ENCODE measurements at regions of chr21 and their contacts with region 1.

Region 1: DNA sequence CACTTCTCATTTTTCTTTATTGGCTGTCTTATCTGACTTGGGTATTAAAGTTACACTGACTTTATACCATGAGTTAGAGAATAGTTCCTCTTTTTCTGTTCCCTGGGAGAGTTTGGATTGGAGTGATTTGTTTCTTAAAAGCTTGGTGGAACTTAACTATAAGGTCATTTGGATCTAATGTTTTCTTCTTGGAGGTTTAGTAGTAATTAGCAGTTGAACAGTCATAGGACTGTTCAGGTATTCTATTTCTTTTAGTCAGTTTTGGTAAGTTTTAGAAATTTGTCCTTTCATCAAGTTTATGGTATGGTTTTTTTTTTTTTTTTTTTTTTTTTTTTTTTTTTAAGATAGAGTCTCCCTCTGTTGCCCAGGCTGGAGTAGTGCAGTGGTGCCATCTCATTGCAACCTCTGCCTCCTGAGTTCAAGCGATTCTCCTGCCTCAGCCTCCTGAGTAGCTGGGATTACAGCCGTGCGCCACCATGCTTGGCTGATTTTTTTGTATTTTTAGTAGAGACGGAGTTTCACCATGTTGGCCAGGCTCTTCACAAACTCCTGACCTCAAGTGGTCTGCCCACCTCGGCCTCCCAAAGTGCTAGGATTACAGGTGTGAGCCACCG is 6.3 kb downstream of the TTC3 start:
- DNase-seq: peak in 1 of 4 experiments; percentile 55
- ATAC-seq: peak; percentile 82
- H3K4me3 ChIP-seq: no peak overlapping the region
- H3K27ac ChIP-seq: peak overlapping the region; percentile 33; the same call in 1 of the 3 replicates
- H3K4me1 ChIP-seq: peaks cover 0 to 13% of the 10 kb centered on the region in 2 experiments; a peak in 3 of 5 replicates
- H3K27me3 ChIP-seq: no peaks in the 10 kb centered on the region
- CTCF ChIP-seq: peak; percentile 53 to 65 (median 56)
- EP300 ChIP-seq: no peak
- POLR2A ChIP-seq: no peak
- RAD21 ChIP-seq: peak in 1 of 2 experiments; percentile 19; a peak in 2 of 4 replicates

Region 2: GRCh38 chr21:37017951-37018679 is 61.2 kb before region 1 on chr21:
- CTCF ChIA-PET with region 1: no interaction called
- POLR2A ChIA-PET with region 1: no interaction called
- in situ Hi-C with region 1: no loop called
- intact Hi-C with region 1: loop called (anchors 5 kb)
- DNase-seq: peak in 3 of 4 experiments; percentile 29 to 68 (median 52)
- ATAC-seq: peak; percentile 82
- H3K4me3 ChIP-seq: no peak overlapping the region
- H3K27ac ChIP-seq: no peak overlapping the region; the same call in 2 of the 3 replicates
- H3K4me1 ChIP-seq: peaks cover 10 to 11% of the 10 kb centered on the region in 2 experiments; a peak in 4 of 5 replicates
- H3K27me3 ChIP-seq: peaks cover 0 to 2% of the 10 kb centered on the region in 2 experiments; a peak in 1 of 5 replicates
- CTCF ChIP-seq: no peak
- EP300 ChIP-seq: peak; percentile 71
- POLR2A ChIP-seq: no peak
- RAD21 ChIP-seq: no peak

Region 3: DNA sequence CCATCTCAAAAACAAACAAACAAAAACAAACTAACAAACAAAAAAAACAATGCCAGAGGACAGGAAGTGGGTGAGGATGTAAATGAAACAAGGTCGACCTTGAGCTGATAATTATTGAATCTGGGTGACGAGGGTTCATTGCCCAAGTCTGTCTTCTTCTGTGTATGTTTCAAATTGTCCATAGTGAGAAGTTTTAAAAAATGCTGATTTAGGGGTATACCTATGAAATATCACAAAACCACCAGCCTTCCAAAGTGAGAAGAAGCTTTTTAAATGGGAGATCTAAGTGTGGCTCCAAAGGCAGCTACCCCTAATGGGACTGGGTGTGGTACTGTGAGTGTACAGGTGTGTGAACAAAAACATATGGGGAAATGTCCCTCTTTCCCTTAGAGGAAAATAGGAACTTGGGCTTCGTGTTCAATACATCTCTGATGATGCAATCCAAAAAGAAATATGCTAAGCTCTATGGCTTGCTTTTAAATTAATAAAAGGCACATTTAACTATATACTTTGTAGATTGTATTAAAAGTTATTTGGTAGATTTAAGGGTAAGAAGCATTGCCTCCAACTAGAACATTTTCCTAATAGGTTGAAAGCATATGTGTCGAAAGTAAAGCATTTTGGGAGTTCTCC is 220.9 kb after region 1 on chr21:
- CTCF ChIA-PET with region 1: no interaction called
- POLR2A ChIA-PET with region 1: no interaction called
- in situ Hi-C with region 1: no loop called
- intact Hi-C with region 1: no loop called
- DNase-seq: no peak
- ATAC-seq: no peak
- H3K4me3 ChIP-seq: no peak overlapping the region
- H3K27ac ChIP-seq: no peak overlapping the region
- H3K4me1 ChIP-seq: peaks cover 0 to 3% of the 10 kb centered on the region in 2 experiments; a peak in 2 of 5 replicates
- H3K27me3 ChIP-seq: peaks cover 0 to 11% of the 10 kb centered on the region in 2 experiments; a peak in 2 of 5 replicates
- CTCF ChIP-seq: no peak
- EP300 ChIP-seq: no peak
- POLR2A ChIP-seq: no peak
- RAD21 ChIP-seq: no peak